PC-9 (cell line): ENCODE measurements at regions of chr1 and their contacts with region 1.

Region 1: DNA sequence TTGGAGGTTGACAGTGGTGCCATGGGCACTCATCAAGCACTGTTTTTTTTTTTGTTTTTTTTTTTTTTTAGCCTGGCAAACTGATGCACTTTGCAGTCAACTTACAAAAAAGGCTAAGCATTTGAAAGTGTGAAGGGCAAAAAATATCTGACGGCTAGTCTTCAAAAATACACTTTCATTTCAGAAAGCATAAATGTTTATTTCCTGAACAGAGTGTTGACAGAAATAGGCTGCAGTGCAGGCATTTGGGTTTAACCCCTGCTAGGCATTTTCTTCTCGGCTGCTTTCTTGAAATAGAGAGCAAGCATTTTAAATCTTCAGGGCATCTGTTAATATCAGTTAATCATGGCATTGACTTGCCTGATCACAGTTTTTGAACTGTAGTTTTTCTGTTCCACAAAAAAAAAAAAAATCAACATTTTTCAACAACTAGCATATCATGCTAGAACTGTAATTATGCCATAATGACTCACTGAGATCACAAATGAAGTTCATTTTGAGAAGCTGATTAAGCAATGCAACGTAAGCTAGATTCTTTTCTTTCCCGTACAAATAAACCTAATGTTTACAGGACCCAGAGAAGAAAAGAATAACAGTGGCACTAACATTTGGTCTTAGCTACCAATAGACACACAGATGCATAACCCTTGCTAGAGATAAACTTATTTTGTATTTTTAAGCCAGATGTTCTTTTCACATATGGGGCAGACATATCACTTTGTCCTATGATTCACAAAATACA is 100.4 kb upstream of the USH2A start:
- DNase-seq: no peak
- H3K4me3 ChIP-seq: no peak overlapping the region
- H3K27ac ChIP-seq: no peak overlapping the region
- H3K4me1 ChIP-seq: peaks cover 5% of the 10 kb centered on the region
- H3K27me3 ChIP-seq: no peaks in the 10 kb centered on the region
- CTCF ChIP-seq: no peak

Region 2: DNA sequence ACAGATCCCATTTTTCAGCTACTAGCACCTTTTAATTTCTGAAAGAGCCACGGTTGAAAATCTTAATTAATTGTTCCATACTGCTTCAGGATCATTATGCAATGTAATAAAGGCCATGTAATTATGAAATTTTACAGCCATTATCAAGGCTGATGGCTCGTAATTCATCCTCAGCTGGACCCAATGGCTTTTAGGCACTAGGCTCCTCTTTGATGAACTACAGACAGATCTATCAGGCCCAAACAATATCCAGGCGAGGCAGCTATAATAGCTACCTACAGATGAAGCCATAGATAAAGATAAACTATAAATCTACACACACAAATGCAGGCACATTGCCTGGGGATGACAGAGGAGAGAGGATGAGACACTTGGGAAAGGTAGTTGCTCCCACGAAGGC is 10.2 kb after region 1 on chr1:
- CTCF ChIA-PET with region 1: no interaction called
- POLR2A ChIA-PET with region 1: no interaction called
- intact Hi-C with region 1: loop called (anchors 1 kb)
- DNase-seq: no peak
- H3K4me3 ChIP-seq: no peak overlapping the region
- H3K27ac ChIP-seq: no peak overlapping the region
- H3K4me1 ChIP-seq: peaks cover 7% of the 10 kb centered on the region
- H3K27me3 ChIP-seq: no peaks in the 10 kb centered on the region
- CTCF ChIP-seq: no peak

Region 3: DNA sequence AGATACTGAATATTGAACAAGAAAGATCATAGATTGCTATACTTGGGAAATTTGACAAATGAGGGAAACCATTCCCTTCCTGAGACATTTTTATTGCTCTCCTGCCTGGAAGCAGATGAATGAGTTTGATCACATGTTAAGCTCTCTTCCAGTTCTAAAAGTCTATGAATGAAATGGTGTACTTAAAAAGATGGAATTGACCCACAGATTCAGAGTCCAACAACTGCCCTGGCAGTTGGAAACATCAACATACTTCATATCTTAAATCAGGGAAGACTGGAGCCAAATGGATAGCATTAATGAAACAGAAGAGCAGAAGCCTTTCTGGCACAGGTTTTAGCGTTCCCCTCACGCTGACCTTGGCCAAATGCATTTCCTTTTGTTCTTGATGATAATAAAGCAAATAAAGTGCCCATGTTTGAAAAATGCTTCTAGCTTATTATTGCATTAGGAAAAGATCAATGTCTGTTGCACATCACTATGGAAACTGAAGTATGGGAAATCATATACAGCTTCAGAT is 57.0 kb after region 1 on chr1:
- CTCF ChIA-PET with region 1: no interaction called
- POLR2A ChIA-PET with region 1: no interaction called
- intact Hi-C with region 1: no loop called
- DNase-seq: no peak
- H3K4me3 ChIP-seq: no peak overlapping the region
- H3K27ac ChIP-seq: no peak overlapping the region
- H3K4me1 ChIP-seq: no peaks in the 10 kb centered on the region
- H3K27me3 ChIP-seq: no peaks in the 10 kb centered on the region
- CTCF ChIP-seq: no peak